Caco-2 (cell line): ENCODE measurements at regions of chr19 and their contacts with region 1.

Region 1: DNA sequence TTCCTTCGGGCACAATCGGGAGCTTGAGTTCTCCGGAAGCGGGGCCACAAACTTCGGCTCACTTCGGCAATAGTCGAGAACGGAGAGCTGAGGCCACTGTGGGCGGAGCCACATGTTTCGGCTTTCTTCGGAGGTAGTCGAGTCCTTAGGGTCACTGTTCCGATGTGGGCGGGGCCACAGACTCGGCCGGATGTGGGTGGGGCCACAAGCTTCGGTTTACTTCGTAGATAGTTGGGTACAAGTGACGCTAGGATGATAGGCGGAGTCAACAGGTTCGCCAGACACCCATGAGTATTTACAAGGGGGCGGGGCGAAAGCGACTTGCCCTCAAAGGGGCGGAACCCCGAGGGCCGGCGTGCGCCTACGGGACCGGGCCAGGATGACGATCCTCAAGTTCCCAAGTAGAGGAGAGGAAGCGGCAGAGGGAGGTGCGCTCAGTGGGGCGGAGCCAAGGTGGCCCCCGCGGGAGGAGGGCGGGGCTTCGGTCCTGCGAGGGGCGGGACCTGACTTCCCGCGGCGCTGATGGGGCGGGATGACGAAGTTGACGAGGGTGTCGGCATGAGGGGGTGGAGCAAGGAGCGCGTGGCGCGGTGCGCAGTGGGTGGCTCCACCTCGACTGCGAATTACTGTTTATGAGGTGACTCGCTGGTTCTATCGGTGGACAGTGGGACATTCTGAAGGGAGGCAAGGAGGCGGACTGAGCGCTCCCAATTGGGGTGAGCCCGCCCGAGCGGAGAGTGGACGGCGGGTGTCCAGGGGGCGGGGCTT is 539 bp upstream of the MBOAT7 start:
- DNase-seq: peak; percentile 100
- H3K4me3 ChIP-seq: peak overlapping the region; percentile 97
- H3K4me3 Mint-ChIP-seq: peak overlapping the region; percentile 85
- H3K27ac Mint-ChIP-seq: peak overlapping the region; percentile 98
- H3K4me1 ChIP-seq: 0 out of 2 replicates have a peak, but pooled peaks cover 6% of the 10 kb centered on the region
- H3K4me1 Mint-ChIP-seq: peaks cover 34% of the 10 kb centered on the region
- H3K27me3 ChIP-seq: no peaks in the 10 kb centered on the region
- H3K27me3 Mint-ChIP-seq: no peaks in the 10 kb centered on the region
- CTCF ChIP-seq: no peak

Region 2: DNA sequence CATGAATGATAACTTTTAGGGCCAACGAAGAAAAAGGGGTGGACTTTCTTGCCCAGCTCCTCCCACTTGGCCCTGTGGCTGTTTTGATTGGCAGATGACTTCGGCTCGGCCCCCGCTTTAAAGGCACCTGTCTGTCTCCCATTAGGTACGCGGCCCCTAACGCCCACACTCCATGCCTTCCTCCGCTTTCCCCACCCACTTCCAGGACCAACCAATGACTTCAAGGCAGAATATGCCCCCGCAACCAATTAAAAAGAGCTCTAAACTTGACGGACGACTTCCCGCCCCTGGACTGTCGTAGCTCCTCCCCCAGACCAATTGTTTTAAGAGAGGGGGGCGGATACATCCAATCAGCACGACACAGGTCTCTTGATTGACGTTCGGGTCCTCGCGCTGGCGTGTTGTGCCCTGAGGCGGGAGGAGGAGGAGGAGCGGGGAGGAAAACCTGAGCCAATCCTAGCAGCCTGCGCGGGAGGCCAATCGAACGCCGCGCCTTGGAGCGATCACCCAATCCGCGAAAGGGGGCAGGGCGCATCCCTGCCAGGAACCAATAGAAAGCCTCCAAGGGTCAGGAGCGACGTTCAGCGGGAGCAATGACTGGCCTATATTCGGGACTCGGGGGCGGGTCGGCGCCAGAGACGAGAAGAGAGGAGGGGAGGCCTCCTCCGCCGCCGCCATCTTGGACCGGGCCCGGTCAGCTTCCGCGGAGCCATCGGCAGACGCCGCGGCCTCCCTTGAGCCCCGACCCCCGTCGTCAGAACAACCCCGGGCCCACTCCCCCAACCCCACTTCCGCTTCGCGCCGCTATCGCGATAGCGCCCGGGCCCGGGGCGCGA is 52.6 kb before region 1 on chr19 and contains the start of gene CNOT3:
- CTCF ChIA-PET with region 1: interaction called, 9 read pairs
- POLR2A ChIA-PET with region 1: interaction called, 58 read pairs
- intact Hi-C with region 1: loop called (anchors 1 kb)
- DNase-seq: peak; percentile 100
- H3K4me3 ChIP-seq: peak within 1 kb of the TSS; percentile 96
- H3K4me3 Mint-ChIP-seq: peak within 1 kb of the TSS; percentile 88
- H3K27ac Mint-ChIP-seq: peak within 1 kb of the TSS; percentile 82
- H3K4me1 ChIP-seq: peaks cover 9% of the 10 kb centered on the region
- H3K4me1 Mint-ChIP-seq: peaks cover 14% of the 10 kb centered on the region
- H3K27me3 ChIP-seq: no peaks in the 10 kb centered on the region
- H3K27me3 Mint-ChIP-seq: no peaks in the 10 kb centered on the region
- CTCF ChIP-seq: no peak
- total RNA-seq, gene CNOT3: 77.7 and 82.1 TPM in 2 replicates

Region 3: DNA sequence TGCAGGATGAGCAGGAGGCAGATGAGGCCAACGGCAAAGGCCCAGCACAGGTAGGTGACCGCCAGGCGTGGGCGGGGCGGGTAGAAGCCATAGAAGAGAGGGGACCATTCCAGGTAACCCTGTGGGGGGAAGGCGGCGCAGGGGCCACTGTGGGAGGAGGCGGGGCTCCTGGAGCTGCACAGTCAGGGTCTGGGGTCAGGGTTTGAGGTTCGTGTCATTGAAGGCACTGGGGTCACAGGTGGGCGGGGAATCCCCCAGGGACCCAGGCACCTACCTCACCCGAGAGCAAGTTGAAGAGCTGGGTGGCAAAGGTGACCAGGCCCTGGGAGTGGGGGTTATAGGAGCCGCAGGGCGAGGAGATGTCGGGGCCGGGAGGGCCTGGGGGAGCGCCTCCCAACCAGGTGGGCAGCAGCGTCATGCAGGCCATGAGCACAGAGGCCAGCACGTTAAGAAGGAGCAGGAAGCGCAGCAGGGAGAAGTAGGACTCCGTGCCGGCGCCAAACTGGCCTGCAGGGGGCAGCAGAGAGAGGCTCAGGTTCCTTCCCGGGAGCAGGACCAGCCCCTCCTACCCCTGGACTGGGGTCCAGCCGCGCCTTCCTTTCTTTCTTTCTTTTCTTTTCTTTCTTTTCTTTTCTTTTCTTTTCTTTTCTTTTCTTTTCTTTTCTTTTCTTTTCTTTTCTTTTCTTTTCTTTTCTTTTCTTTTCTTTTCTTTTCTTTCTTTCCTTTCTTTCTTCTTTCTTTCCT is 21.6 kb before region 1 on chr19:
- CTCF ChIA-PET with region 1: interaction called, 56 read pairs
- POLR2A ChIA-PET with region 1: interaction called, 40 read pairs
- intact Hi-C with region 1: loop called (anchors 1 kb)
- DNase-seq: peak; percentile 90 to 95
- H3K4me3 ChIP-seq: no peak overlapping the region
- H3K4me3 Mint-ChIP-seq: no peak overlapping the region
- H3K27ac Mint-ChIP-seq: no peak overlapping the region
- H3K4me1 ChIP-seq: peaks cover 1% of the 10 kb centered on the region
- H3K4me1 Mint-ChIP-seq: peaks cover 30% of the 10 kb centered on the region
- H3K27me3 ChIP-seq: no peaks in the 10 kb centered on the region
- H3K27me3 Mint-ChIP-seq: no peaks in the 10 kb centered on the region
- CTCF ChIP-seq: peak; percentile 90 to 92

Region 4: GRCh38 chr19:54209811-54210494 is 20.0 kb after region 1 on chr19:
- CTCF ChIA-PET with region 1: interaction called, 4 read pairs
- POLR2A ChIA-PET with region 1: interaction called, 36 read pairs
- intact Hi-C with region 1: no loop called
- DNase-seq: peak; percentile 70 to 79
- H3K4me3 ChIP-seq: no peak overlapping the region
- H3K4me3 Mint-ChIP-seq: peak overlapping the region; percentile 45
- H3K27ac Mint-ChIP-seq: peak overlapping the region; percentile 78
- H3K4me1 ChIP-seq: peaks cover 65% of the 10 kb centered on the region
- H3K4me1 Mint-ChIP-seq: peaks cover 41% of the 10 kb centered on the region
- H3K27me3 ChIP-seq: no peaks in the 10 kb centered on the region
- H3K27me3 Mint-ChIP-seq: no peaks in the 10 kb centered on the region
- CTCF ChIP-seq: no peak

Region 5: DNA sequence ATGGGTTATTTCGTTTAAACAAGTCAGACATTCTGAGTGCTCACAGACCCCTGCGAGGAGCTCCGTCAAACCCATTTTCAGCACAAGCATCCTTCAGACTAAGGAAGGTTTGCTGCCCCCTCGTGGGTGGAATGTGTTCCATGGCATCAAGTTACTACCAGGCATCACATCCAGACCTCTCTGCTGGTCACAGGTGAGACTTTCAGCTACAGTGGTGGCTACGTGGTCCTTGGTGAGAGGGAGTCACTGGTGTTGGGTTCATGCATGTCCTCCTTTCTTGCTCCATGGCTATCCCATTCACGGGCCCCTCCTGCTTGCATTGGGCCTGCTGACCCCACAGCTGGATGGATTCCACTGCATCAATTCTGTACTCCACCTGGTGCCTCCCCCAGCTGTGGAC is 76.2 kb after region 1 on chr19:
- CTCF ChIA-PET with region 1: interaction called, 21 read pairs
- POLR2A ChIA-PET with region 1: no interaction called
- intact Hi-C with region 1: no loop called
- DNase-seq: peak; percentile 87 to 89
- H3K4me3 ChIP-seq: no peak overlapping the region
- H3K4me3 Mint-ChIP-seq: no peak overlapping the region
- H3K27ac Mint-ChIP-seq: no peak overlapping the region
- H3K4me1 ChIP-seq: no peaks in the 10 kb centered on the region
- H3K4me1 Mint-ChIP-seq: no peaks in the 10 kb centered on the region
- H3K27me3 ChIP-seq: no peaks in the 10 kb centered on the region; the same call in 1 of the 2 replicates
- H3K27me3 Mint-ChIP-seq: peaks cover 18% of the 10 kb centered on the region
- CTCF ChIP-seq: peak; percentile 76 to 90

Region 6: DNA sequence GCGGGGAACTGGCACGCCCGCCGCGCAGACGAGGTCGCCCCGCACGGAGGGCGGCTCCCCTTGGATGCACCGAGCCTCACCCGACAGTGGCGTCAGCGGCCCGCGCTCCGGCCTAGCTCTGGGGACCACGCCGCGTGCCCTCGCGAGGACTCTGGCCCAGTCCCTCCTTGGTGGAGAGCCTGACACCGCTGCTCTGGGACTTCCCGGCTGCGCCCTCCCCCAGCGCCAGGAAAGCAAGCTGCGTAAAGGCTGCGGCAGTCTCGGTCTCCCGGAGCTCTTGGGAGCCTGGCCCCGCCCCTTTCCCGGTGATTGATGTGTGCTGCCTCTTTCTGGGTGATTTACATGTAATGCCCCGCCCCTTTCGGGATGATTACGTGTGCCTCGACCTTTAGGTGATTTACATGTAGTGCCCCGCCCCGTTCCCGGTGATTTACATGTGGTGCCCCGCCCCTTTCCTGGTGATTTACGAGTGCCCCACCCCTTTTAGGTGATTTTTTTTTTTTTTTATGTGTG is 273.7 kb after region 1 on chr19 and contains the start of gene LENG9:
- CTCF ChIA-PET with region 1: interaction called, 3 read pairs
- POLR2A ChIA-PET with region 1: interaction called, 5 read pairs
- intact Hi-C with region 1: loop called (anchors 5 kb)
- DNase-seq: peak; percentile 99 to 100
- H3K4me3 ChIP-seq: peak within 1 kb of the TSS; percentile 81
- H3K4me3 Mint-ChIP-seq: peak within 1 kb of the TSS; percentile 92
- H3K27ac Mint-ChIP-seq: peak within 1 kb of the TSS; percentile 99
- H3K4me1 ChIP-seq: peaks cover 15% of the 10 kb centered on the region
- H3K4me1 Mint-ChIP-seq: peaks cover 25% of the 10 kb centered on the region
- H3K27me3 ChIP-seq: no peaks in the 10 kb centered on the region
- H3K27me3 Mint-ChIP-seq: no peaks in the 10 kb centered on the region
- CTCF ChIP-seq: no peak
- total RNA-seq, gene LENG9: 6.7 and 6.9 TPM in 2 replicates